Sigmoid colon (tissue), 7 donors: ENCODE measurements at regions of chr16 and their contacts with region 1.

Region 1: DNA sequence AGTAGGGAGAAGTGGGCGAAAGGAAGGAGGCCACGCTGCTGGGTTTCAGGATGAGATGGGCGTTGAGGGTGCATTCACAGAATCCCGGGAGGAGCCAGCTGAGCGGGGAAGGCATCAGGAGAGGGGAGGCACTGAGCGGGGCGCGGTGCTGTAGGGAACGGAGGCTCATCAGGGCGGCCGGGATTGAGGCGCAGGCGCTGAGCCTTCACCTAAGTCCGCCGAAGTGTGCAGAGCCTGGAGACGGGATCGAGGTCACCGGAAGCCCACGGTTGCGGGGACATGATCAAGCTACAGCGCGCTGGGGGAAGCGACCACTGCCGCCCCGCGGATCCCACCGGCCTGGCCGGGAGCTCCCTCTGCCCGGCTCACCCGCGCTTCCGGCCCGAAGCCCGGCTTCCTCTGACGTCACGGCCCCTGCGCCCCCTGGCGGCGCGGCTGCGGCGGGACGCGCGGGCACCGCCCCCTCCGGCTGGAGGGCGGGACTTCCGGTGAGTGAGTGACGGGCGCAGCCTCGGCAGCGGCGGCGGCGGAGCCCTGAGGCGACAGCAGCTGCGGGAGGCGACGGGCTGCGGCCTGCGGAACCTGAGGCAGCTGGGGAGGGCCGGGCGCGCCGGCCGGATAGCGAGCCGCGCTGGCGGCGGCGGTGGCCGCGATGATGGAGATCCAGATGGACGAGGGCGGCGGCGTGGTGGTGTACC is at the start of gene MAPK8IP3:
- DNase-seq: peak; percentile 95
- H3K4me3 ChIP-seq: peak within 1 kb of the TSS; percentile 84 to 89 (median 87)
- H3K27ac ChIP-seq: peak within 1 kb of the TSS; percentile 86 to 97 (median 94)
- H3K4me1 ChIP-seq: peaks cover 0 to 43% (median 33%) of the 10 kb centered on the region in 4 donors
- H3K27me3 ChIP-seq: no peaks in the 10 kb centered on the region
- CTCF ChIP-seq: peak; percentile 48 to 94 (median 70)
- EP300 ChIP-seq: no peak
- POLR2A ChIP-seq: peak; percentile 94
- total RNA-seq, gene MAPK8IP3: 22.1 to 80.9 (median 30.8) TPM

Region 2: GRCh38 chr16:1414532-1415275 is 291.1 kb before region 1 on chr16 and contains the start of gene UNKL:
- intact Hi-C with region 1: loop called (anchors 5 kb)
- DNase-seq: peak; percentile 89
- H3K4me3 ChIP-seq: peak within 1 kb of the TSS; percentile 96 to 100 (median 98)
- H3K27ac ChIP-seq: peak within 1 kb of the TSS; percentile 85 to 92 (median 90)
- H3K4me1 ChIP-seq: peaks cover 0 to 44% (median 31%) of the 10 kb centered on the region in 4 donors
- H3K27me3 ChIP-seq: no peaks in the 10 kb centered on the region
- CTCF ChIP-seq: no peak
- EP300 ChIP-seq: peak in 1 of 4 donors; percentile 15
- POLR2A ChIP-seq: no peak
- total RNA-seq, gene UNKL: 19.6 to 29.1 (median 20.7) TPM

Region 3: DNA sequence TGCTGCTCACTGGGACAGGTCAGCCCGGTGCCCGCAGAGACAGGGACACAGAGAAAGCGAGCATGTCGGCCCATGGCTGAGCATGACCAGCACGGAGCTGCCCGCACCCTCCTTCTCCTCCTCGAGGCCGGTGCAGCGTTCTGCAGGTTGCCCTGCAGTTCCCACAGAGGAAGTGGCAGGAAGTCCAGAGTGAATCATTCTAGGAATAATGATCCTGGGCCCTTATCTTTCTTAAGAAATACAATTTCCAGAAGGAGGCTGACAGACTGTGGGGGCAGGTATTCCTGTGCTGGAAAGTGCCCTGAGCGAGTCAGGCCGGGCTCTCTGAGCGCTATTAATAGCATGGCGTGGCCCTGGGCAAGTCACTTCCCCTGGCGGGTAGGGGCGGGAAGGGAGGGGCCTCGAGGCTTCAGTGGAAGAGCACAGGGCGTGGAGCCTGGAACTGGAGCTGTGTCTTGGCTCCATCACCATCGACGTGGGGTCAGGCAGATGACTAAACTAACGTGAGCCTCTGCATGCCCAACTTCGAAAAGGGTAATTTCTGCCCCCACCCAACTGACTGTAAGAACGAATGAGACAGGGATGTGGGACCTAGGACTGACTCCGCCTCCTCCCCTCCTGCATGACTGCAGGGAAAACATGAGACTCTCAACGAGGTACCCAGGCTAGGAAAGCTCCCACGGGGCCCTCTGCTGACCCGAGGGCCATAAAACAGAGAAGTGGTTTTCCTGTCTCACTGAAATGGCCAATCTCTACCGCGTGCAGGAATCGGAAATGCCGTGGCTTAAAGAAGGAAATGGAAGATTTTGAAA is 162.5 kb before region 1 on chr16:
- intact Hi-C with region 1: no loop called
- DNase-seq: peak; percentile 80
- H3K4me3 ChIP-seq: no peak overlapping the region
- H3K27ac ChIP-seq: peak overlapping the region; percentile 76 to 85 (median 84)
- H3K4me1 ChIP-seq: peaks cover 0 to 64% (median 48%) of the 10 kb centered on the region in 4 donors
- H3K27me3 ChIP-seq: no peaks in the 10 kb centered on the region
- CTCF ChIP-seq: no peak
- EP300 ChIP-seq: peak in 1 of 4 donors; percentile 10
- POLR2A ChIP-seq: no peak

Region 4: DNA sequence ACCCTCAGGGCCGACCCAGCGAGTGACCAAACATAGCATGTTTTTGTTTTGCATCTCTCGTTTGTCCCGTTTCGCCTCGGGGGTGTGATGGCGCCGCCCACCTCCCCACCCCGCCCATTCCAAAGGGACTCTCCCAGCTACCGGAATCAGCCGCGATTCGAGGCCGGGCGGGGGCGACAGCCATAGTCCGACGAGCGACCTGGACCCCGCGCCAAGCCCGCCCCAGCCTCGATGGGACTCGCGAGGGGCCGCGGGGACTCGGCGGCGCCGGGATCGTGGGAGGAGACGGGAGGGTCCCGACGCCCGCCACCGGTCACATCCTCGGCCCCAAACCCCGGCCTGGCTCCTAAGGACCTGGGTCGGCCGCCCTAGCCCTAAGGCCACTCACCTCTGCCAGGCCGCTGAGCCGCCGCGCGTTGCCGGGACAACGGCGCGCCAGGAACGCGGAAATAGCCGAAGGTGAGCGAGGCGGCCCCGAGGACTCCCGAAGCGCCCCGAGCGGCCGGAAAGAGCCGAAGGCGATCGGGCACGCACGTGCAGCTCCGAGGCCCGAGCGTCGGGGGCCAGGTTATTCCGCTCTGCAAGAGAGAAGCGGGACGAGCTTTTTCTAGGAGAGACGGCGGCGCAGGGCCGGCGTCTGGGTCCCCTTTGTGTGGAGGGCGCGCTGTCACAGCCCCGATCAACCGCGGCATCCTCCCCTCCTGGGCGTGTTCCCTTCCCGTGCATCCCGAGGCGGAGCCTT is 95.4 kb before region 1 on chr16:
- intact Hi-C with region 1: loop called (anchors 2 kb)
- DNase-seq: peak; percentile 94
- H3K4me3 ChIP-seq: peak overlapping the region; percentile 75 to 92 (median 86)
- H3K27ac ChIP-seq: peak overlapping the region; percentile 84 to 93 (median 87)
- H3K4me1 ChIP-seq: peaks cover 0 to 46% (median 37%) of the 10 kb centered on the region in 4 donors
- H3K27me3 ChIP-seq: no peaks in the 10 kb centered on the region
- CTCF ChIP-seq: no peak
- EP300 ChIP-seq: peak in 1 of 4 donors; percentile 11
- POLR2A ChIP-seq: no peak

Region 5: DNA sequence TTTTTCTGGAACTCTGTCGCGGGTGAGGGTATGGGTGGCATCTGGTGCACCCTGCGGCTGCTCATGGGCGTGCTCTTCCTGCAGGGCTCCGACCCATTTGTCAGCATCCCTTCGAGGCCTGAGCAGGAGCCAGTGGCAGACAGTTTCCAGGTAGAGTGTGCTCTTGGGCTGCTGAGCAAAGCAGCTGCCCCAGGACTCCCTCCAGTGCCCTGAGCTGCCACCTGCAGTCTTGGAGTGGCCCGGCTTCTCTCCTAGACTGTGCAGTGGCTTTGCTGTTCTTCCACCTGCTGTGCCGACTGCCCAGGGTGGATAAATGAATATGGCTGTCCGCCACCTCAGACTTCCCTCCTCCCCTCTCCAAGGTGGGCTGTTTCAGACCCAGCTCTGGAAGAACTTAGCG is 38.6 kb before region 1 on chr16:
- intact Hi-C with region 1: no loop called
- DNase-seq: no peak
- H3K4me3 ChIP-seq: no peak overlapping the region
- H3K27ac ChIP-seq: no peak overlapping the region
- H3K4me1 ChIP-seq: no peaks in the 10 kb centered on the region
- H3K27me3 ChIP-seq: no peaks in the 10 kb centered on the region
- CTCF ChIP-seq: no peak
- EP300 ChIP-seq: no peak
- POLR2A ChIP-seq: no peak

Region 6: DNA sequence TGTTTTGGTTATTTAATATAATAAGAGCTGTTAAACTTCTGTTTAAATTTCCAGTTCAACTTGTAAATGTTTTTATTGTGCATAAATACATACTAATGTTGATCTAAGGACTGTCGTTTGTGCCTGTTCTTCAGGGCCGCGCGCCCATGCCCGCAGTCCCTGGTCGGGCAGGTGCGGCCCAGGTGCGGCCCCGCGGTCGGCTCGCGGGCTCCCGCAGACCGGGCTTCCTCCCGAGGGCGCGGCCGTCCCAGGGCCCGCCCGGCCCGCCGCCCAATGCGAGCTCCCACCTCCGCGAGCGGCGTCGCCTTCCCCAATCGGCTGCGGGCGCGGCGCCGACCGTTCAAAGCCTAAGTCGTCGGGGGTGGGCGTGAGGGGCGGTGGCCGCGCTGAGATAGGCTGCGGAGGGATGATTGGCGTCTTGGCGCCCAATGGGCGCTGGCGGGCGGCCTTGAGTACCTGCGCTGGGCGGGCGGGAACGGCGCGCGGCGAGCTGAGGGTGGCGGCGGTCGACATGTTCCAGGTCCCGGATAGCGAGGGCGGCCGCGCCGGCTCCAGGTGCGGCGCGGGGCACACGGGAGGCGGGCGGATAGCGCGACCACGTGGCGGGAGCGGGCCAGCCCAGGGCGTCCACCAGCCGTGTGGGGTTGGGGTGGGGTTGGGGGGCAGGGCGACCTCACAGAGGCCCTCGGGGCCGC is 27.9 kb before region 1 on chr16 and contains the start of gene JPT2:
- intact Hi-C with region 1: loop called (anchors 1 kb)
- DNase-seq: peak; percentile 98
- H3K4me3 ChIP-seq: peak within 1 kb of the TSS; percentile 41 to 95 (median 80)
- H3K27ac ChIP-seq: peak within 1 kb of the TSS; percentile 73 to 75 (median 75)
- H3K4me1 ChIP-seq: peaks cover 0 to 16% (median 7%) of the 10 kb centered on the region in 4 donors
- H3K27me3 ChIP-seq: no peaks in the 10 kb centered on the region
- CTCF ChIP-seq: no peak
- EP300 ChIP-seq: no peak
- POLR2A ChIP-seq: no peak
- total RNA-seq, gene JPT2: 12.4 to 18.1 (median 17.3) TPM

Region 7: GRCh38 chr16:1772736-1773584 is 67.1 kb after region 1 on chr16 and contains the starts of genes EME2 and MRPS34:
- intact Hi-C with region 1: loop called (anchors 5 kb)
- DNase-seq: peak; percentile 90
- H3K4me3 ChIP-seq: peak within 1 kb of the TSS; percentile 64 to 93 (median 90)
- H3K27ac ChIP-seq: peak within 1 kb of the TSS; percentile 91 to 97 (median 96)
- H3K4me1 ChIP-seq: peaks cover 0 to 56% (median 47%) of the 10 kb centered on the region in 4 donors
- H3K27me3 ChIP-seq: no peaks in the 10 kb centered on the region
- CTCF ChIP-seq: peak; percentile 37 to 74 (median 64)
- EP300 ChIP-seq: peak in 1 of 4 donors; percentile 25
- POLR2A ChIP-seq: peak; percentile 55 to 68
- total RNA-seq, gene EME2: 4.3 to 10.5 (median 7.2) TPM
- total RNA-seq, gene MRPS34: 61.5 to 104 (median 71.1) TPM

Region 8: DNA sequence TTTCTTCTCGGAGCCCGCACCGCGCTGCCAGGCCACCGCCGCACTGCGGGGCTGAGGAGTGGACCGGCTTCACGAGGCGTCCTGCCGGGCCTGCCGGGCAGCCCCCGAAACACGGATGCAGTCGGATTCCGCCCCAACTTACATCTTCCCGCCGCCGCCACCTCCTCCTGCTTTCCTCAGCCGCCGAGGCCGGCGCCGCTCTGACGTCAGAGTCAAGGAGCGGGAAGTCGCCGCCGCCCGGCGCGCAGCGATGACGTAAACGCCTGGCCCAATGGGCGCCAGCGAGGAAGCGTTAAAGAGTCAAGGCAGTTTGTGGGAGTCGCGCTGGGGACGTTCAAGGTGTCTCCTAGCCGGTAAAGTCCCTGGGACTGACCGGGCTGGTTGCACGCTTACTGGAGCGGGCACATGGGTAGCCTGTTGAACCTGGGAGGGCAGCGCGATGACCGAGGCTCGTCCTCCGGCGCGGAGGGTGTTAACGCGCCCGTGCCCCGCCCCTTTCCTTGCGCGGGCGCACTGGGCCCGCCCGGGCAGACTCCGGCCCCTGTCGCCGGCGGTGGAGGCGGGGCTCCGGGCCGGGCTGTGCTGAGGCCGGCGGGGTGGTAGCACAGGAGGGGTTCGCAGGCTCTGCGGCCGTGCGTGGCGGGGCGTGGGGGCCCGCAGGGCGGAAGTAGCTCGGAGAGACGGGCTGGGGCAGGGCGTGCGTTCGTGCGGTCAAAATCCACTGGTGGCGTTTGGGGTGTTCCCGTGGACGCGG is 562.3 kb after region 1 on chr16 and contains the start of gene RNPS1:
- intact Hi-C with region 1: loop called (anchors 5 kb)
- DNase-seq: peak; percentile 98
- H3K4me3 ChIP-seq: peak within 1 kb of the TSS; percentile 70 to 90 (median 78)
- H3K27ac ChIP-seq: peak within 1 kb of the TSS; percentile 87 to 98 (median 96)
- H3K4me1 ChIP-seq: peaks cover 0 to 52% (median 35%) of the 10 kb centered on the region in 4 donors
- H3K27me3 ChIP-seq: no peaks in the 10 kb centered on the region
- CTCF ChIP-seq: no peak
- EP300 ChIP-seq: peak in 2 of 4 donors; percentile 33 to 43
- POLR2A ChIP-seq: peak; percentile 98 to 99
- total RNA-seq, gene RNPS1: 110 to 145 (median 128) TPM